Caco-2 (cell line): ENCODE measurements at regions of chr10 and their contacts with region 1.

Region 1: GRCh38 chr10:29725133-29725720 is 90.5 kb upstream of the SVIL start:
- DNase-seq: peak; percentile 63 to 83
- H3K4me3 ChIP-seq: no peak overlapping the region
- H3K4me3 Mint-ChIP-seq: peak overlapping the region; percentile 25
- H3K27ac Mint-ChIP-seq: peak overlapping the region; percentile 72
- H3K4me1 ChIP-seq: peaks cover 41% of the 10 kb centered on the region
- H3K4me1 Mint-ChIP-seq: peaks cover 24% of the 10 kb centered on the region
- H3K27me3 ChIP-seq: no peaks in the 10 kb centered on the region
- H3K27me3 Mint-ChIP-seq: no peaks in the 10 kb centered on the region
- CTCF ChIP-seq: no peak

Region 2: GRCh38 chr10:29883212-29883611 is 158.0 kb after region 1 on chr10:
- CTCF ChIA-PET with region 1: interaction called, 11 read pairs
- POLR2A ChIA-PET with region 1: no interaction called
- intact Hi-C with region 1: no loop called
- DNase-seq: no peak
- H3K4me3 ChIP-seq: no peak overlapping the region
- H3K4me3 Mint-ChIP-seq: no peak overlapping the region
- H3K27ac Mint-ChIP-seq: no peak overlapping the region
- H3K4me1 ChIP-seq: peaks cover 32% of the 10 kb centered on the region
- H3K4me1 Mint-ChIP-seq: peaks cover 25% of the 10 kb centered on the region
- H3K27me3 ChIP-seq: no peaks in the 10 kb centered on the region
- H3K27me3 Mint-ChIP-seq: no peaks in the 10 kb centered on the region
- CTCF ChIP-seq: no peak